Sigmoid colon (tissue), 7 donors: ENCODE measurements at regions of chr1 and their contacts with region 1.

Region 1: DNA sequence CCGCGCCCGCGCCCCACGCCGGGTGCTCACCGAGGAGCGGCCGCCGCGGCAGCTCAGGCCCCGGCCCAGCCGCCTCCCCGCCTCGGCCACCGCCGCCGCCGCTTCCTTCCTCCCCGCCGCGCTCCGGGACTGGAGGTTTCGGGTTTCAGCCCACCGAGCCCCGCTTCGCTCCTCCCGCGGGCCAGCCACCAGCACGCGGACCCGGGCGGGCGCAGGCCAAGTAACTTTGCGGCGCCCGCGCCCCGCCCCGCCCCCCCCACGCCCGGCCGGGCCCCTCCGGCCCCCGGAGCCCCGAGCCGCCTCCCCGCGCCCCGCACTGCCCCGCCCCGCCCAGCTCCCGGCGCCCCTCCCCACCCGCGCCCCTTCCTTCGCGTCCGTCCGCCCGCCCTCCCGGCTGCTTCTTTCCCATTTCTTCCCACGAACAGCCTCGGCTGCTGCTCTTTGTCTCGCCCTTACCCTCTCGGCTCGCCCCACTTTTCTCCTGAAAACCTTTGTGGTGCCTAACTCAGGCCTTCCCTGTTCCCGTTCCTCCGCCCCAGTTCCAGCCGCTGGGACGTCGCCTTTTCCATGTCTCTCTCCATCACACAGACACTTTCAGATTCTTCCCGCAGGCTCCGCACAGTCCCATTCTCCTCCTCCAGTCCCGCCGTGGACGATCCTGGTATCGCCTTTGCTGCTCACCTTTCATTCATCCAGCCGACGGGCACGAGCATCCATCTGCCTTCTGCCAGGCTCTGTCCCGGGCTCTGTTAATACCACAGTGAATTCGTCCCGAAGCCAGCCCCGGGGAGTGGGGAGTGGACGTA is at the start of gene GPR161:
- DNase-seq: peak; percentile 81
- H3K4me3 ChIP-seq: peak within 1 kb of the TSS; percentile 66 to 92 (median 89)
- H3K27ac ChIP-seq: peak within 1 kb of the TSS; percentile 84 to 87 (median 84)
- H3K4me1 ChIP-seq: peaks cover 0 to 35% (median 20%) of the 10 kb centered on the region in 4 donors
- H3K27me3 ChIP-seq: no peaks in the 10 kb centered on the region
- CTCF ChIP-seq: no peak
- EP300 ChIP-seq: no peak
- POLR2A ChIP-seq: no peak
- total RNA-seq, gene GPR161: 8.9 to 23.0 (median 14.1) TPM

Region 2: GRCh38 chr1:168082008-168082876 is 54.7 kb before region 1 on chr1:
- intact Hi-C with region 1: loop called (anchors 2 kb)
- DNase-seq: peak; percentile 83
- H3K4me3 ChIP-seq: no peak overlapping the region
- H3K27ac ChIP-seq: peak overlapping the region in 3 of 4 donors; percentile 11 to 80 (median 42)
- H3K4me1 ChIP-seq: peaks cover 0 to 46% (median 24%) of the 10 kb centered on the region in 4 donors
- H3K27me3 ChIP-seq: no peaks in the 10 kb centered on the region
- CTCF ChIP-seq: peak; percentile 66 to 87 (median 82)
- EP300 ChIP-seq: no peak
- POLR2A ChIP-seq: no peak

Region 3: GRCh38 chr1:168178638-168179437 is 41.9 kb after region 1 on chr1 and contains the start of gene TIPRL:
- intact Hi-C with region 1: loop called (anchors 5 kb)
- DNase-seq: peak; percentile 98
- H3K4me3 ChIP-seq: peak within 1 kb of the TSS; percentile 76 to 84 (median 78)
- H3K27ac ChIP-seq: peak within 1 kb of the TSS; percentile 88 to 95 (median 92)
- H3K4me1 ChIP-seq: peaks cover 0 to 13% (median 10%) of the 10 kb centered on the region in 4 donors
- H3K27me3 ChIP-seq: no peaks in the 10 kb centered on the region
- CTCF ChIP-seq: peak; percentile 40 to 80 (median 74)
- EP300 ChIP-seq: peak in 1 of 4 donors; percentile 65
- POLR2A ChIP-seq: peak; percentile 62 to 75
- total RNA-seq, gene TIPRL: 24.0 to 31.0 (median 30.8) TPM

Region 4: GRCh38 chr1:168225476-168226190 is 88.7 kb after region 1 on chr1 and contains the start of gene SFT2D2:
- intact Hi-C with region 1: loop called (anchors 5 kb)
- DNase-seq: peak; percentile 88
- H3K4me3 ChIP-seq: peak within 1 kb of the TSS; percentile 75 to 95 (median 82)
- H3K27ac ChIP-seq: peak within 1 kb of the TSS; percentile 85 to 93 (median 90)
- H3K4me1 ChIP-seq: peaks cover 0 to 44% (median 40%) of the 10 kb centered on the region in 4 donors
- H3K27me3 ChIP-seq: no peaks in the 10 kb centered on the region
- CTCF ChIP-seq: no peak
- EP300 ChIP-seq: no peak
- POLR2A ChIP-seq: peak; percentile 41 to 58
- total RNA-seq, gene SFT2D2: 36.7 to 43.2 (median 39.2) TPM